T-cell (primary cell): ENCODE measurements at regions of chr5 and their contacts with region 1.

Region 1: DNA sequence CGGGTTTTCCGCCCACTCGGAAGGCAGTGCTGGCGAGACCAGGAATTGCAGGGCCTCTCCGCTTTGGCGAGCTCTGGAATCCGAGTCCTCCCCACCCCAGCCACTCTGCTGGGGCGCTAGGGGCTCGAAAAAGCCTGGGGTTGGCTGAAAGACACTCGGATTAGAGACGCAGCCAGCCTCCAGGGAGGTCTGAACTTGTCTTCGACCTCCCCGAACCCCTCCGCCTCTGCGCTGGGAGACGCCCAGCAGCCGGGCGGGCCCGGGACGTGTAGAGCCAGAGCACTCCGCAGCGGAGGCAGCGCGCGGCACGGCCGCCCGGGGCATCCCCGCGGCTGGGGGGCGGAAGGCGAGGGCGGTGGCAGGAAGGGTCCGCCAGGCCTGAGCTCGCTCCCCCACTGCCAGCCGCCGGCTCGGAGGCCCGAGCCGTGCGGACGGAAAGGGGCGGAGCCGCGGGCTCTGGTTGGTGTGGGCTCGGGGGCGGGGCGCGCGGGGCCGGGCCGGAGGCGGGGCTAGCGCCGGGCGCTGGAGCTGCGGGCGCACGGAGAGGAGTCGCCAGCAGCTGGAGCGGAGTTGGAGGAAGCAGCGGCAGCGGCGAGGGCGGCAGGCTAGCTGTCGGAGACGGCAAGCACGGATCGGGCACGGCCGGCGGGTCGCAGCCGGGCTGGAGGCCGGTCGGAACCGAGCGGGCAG is at the start of gene PIK3R1:
- DNase-seq: peak; percentile 79 to 95 (median 89)
- ATAC-seq: peak; percentile 80 to 85 (median 82)
- H3K4me3 ChIP-seq: peak within 1 kb of the TSS; percentile 76 to 90
- H3K4me3 Mint-ChIP-seq: peak within 1 kb of the TSS; percentile 85 to 93 (median 92)
- H3K27ac ChIP-seq: peak within 1 kb of the TSS; percentile 91
- H3K27ac Mint-ChIP-seq: peak within 1 kb of the TSS; percentile 93 to 97
- H3K4me1 ChIP-seq: peaks cover 16 to 24% of the 10 kb centered on the region in 2 experiments
- H3K4me1 Mint-ChIP-seq: peaks cover 41 to 45% (median 44%) of the 10 kb centered on the region in 3 donors
- H3K27me3 ChIP-seq: no peaks in the 10 kb centered on the region
- H3K27me3 Mint-ChIP-seq: no peaks in the 10 kb centered on the region
- total RNA-seq, gene PIK3R1: 83.7 to 370 (median 105) TPM

Region 2: GRCh38 chr5:68193481-68194036 is 21.8 kb before region 1 on chr5:
- CTCF ChIA-PET with region 1: interaction called, 3 to 12 read pairs
- POLR2A ChIA-PET with region 1: interaction called in 1 of 2 experiments, 6 read pairs
- DNase-seq: no peak
- ATAC-seq: peak in 1 of 4 experiments; percentile 30
- H3K4me3 ChIP-seq: no peak overlapping the region
- H3K4me3 Mint-ChIP-seq: no peak overlapping the region
- H3K27ac ChIP-seq: no peak overlapping the region
- H3K27ac Mint-ChIP-seq: no peak overlapping the region
- H3K4me1 ChIP-seq: no peaks in the 10 kb centered on the region
- H3K4me1 Mint-ChIP-seq: peaks cover 0 to 10% (median 8%) of the 10 kb centered on the region in 3 donors
- H3K27me3 ChIP-seq: no peaks in the 10 kb centered on the region
- H3K27me3 Mint-ChIP-seq: no peaks in the 10 kb centered on the region

Region 3: DNA sequence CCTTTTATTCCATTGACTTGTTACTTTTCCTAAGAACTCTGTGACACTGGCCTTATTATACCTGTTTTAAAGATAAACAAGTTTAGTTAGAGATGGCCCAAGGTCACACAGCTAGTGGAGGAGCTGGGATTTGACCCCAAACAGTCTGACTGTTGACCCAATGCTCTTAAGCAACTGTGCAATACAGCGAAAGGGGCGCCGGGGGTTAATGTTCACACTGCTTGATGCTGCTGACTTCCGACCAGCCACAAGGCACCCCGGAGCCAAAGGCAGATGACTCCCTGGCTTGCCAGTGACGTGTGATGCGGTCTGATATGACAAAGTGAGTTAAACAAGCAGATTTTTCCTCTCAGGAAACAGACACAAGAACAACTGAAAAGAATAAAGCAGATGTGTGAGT is 24.1 kb after region 1 on chr5:
- CTCF ChIA-PET with region 1: interaction called, 4 to 7 read pairs
- POLR2A ChIA-PET with region 1: interaction called, 9 to 25 read pairs
- DNase-seq: peak; percentile 36 to 91 (median 85)
- ATAC-seq: peak; percentile 94 to 98 (median 96)
- H3K4me3 ChIP-seq: no peak overlapping the region
- H3K4me3 Mint-ChIP-seq: peak overlapping the region; percentile 11 to 62 (median 29)
- H3K27ac ChIP-seq: peak overlapping the region; percentile 65
- H3K27ac Mint-ChIP-seq: peak overlapping the region; percentile 76 to 82
- H3K4me1 ChIP-seq: peaks cover 27 to 37% of the 10 kb centered on the region in 2 experiments
- H3K4me1 Mint-ChIP-seq: peaks cover 79 to 87% (median 83%) of the 10 kb centered on the region in 3 donors
- H3K27me3 ChIP-seq: no peaks in the 10 kb centered on the region
- H3K27me3 Mint-ChIP-seq: no peaks in the 10 kb centered on the region

Region 4: GRCh38 chr5:68246802-68247201 is 31.4 kb after region 1 on chr5:
- CTCF ChIA-PET with region 1: interaction called, 4 to 13 read pairs
- POLR2A ChIA-PET with region 1: interaction called in 1 of 2 experiments, 3 read pairs
- DNase-seq: peak in 1 of 35 experiments; percentile 45
- ATAC-seq: peak in 1 of 4 experiments; percentile 39
- H3K4me3 ChIP-seq: no peak overlapping the region
- H3K4me3 Mint-ChIP-seq: no peak overlapping the region
- H3K27ac ChIP-seq: no peak overlapping the region
- H3K27ac Mint-ChIP-seq: peak overlapping the region in 1 of 2 donors; percentile 56
- H3K4me1 ChIP-seq: peaks cover 39 to 41% of the 10 kb centered on the region in 2 experiments
- H3K4me1 Mint-ChIP-seq: peaks cover 78 to 87% (median 84%) of the 10 kb centered on the region in 3 donors
- H3K27me3 ChIP-seq: no peaks in the 10 kb centered on the region
- H3K27me3 Mint-ChIP-seq: no peaks in the 10 kb centered on the region

Region 5: GRCh38 chr5:68252673-68253623 is 37.6 kb after region 1 on chr5:
- CTCF ChIA-PET with region 1: interaction called, 5 to 23 read pairs
- POLR2A ChIA-PET with region 1: interaction called, 4 to 8 read pairs
- DNase-seq: peak in 25 of 35 experiments; percentile 10 to 71 (median 42)
- ATAC-seq: no peak
- H3K4me3 ChIP-seq: no peak overlapping the region
- H3K4me3 Mint-ChIP-seq: no peak overlapping the region
- H3K27ac ChIP-seq: peak overlapping the region; percentile 58
- H3K27ac Mint-ChIP-seq: peak overlapping the region; percentile 84 to 95
- H3K4me1 ChIP-seq: peaks cover 48 to 60% of the 10 kb centered on the region in 2 experiments
- H3K4me1 Mint-ChIP-seq: peaks cover 90 to 96% (median 93%) of the 10 kb centered on the region in 3 donors
- H3K27me3 ChIP-seq: no peaks in the 10 kb centered on the region
- H3K27me3 Mint-ChIP-seq: no peaks in the 10 kb centered on the region

Region 6: GRCh38 chr5:68279984-68280383 is 64.6 kb after region 1 on chr5:
- CTCF ChIA-PET with region 1: interaction called in 1 of 2 experiments, 4 read pairs
- POLR2A ChIA-PET with region 1: interaction called in 1 of 2 experiments, 14 read pairs
- DNase-seq: peak in 32 of 35 experiments; percentile 24 to 88 (median 48)
- ATAC-seq: peak; percentile 93 to 97 (median 95)
- H3K4me3 ChIP-seq: peak overlapping the region; percentile 29 to 57
- H3K4me3 Mint-ChIP-seq: peak overlapping the region; percentile 85 to 88 (median 86)
- H3K27ac ChIP-seq: peak overlapping the region; percentile 84
- H3K27ac Mint-ChIP-seq: peak overlapping the region; percentile 98
- H3K4me1 ChIP-seq: peaks cover 46 to 49% of the 10 kb centered on the region in 2 experiments
- H3K4me1 Mint-ChIP-seq: peaks cover 86 to 91% (median 90%) of the 10 kb centered on the region in 3 donors
- H3K27me3 ChIP-seq: no peaks in the 10 kb centered on the region
- H3K27me3 Mint-ChIP-seq: no peaks in the 10 kb centered on the region

Region 7: DNA sequence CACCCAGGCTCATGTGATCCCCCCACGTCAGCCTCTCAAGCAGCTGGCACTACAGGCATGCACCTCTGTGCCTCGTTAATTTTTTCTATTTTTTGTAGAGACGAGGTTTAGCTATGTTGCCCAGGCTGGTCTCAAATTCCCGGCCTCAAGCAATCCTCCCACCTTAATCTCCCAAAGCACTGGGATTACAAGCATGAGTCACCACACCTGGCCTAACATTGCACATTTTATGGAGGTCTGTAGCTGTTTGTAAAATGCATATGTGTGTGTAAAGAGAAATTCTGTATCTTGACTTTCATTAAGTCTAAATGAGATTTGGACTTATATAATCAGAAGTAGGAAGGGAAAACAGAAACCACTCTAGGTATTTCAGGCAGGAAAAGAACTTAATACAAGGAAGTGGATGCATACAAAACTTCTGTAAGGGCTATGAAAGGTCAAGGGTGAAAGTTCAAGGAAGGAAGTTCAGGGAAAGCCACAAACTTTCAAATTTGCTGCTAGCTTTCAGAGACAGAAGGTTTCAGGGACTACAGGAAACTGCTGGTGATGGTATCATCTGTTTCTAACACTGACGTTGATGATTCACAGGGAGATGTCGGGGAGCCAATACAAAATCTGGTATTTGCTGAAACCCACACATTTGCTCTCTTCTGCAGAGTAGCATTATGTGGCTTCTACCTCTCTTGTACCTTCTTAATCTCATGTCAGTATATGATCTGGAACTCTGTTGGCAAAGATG is 209.6 kb after region 1 on chr5:
- CTCF ChIA-PET with region 1: interaction called in 1 of 2 experiments, 15 read pairs
- POLR2A ChIA-PET with region 1: no interaction called
- DNase-seq: peak in 9 of 35 experiments; percentile 3 to 58 (median 13)
- ATAC-seq: peak; percentile 82 to 90 (median 90)
- H3K4me3 ChIP-seq: no peak overlapping the region
- H3K4me3 Mint-ChIP-seq: peak overlapping the region in 1 of 3 donors; percentile 4
- H3K27ac ChIP-seq: peak overlapping the region; percentile 63
- H3K27ac Mint-ChIP-seq: peak overlapping the region; percentile 85 to 86
- H3K4me1 ChIP-seq: peaks cover 6 to 16% of the 10 kb centered on the region in 2 experiments
- H3K4me1 Mint-ChIP-seq: peaks cover 22 to 28% (median 26%) of the 10 kb centered on the region in 3 donors
- H3K27me3 ChIP-seq: no peaks in the 10 kb centered on the region
- H3K27me3 Mint-ChIP-seq: no peaks in the 10 kb centered on the region

Region 8: GRCh38 chr5:68446487-68446894 is 231.1 kb after region 1 on chr5:
- CTCF ChIA-PET with region 1: no interaction called
- POLR2A ChIA-PET with region 1: no interaction called
- DNase-seq: no peak
- ATAC-seq: no peak
- H3K4me3 ChIP-seq: no peak overlapping the region
- H3K4me3 Mint-ChIP-seq: no peak overlapping the region
- H3K27ac ChIP-seq: no peak overlapping the region
- H3K27ac Mint-ChIP-seq: no peak overlapping the region
- H3K4me1 ChIP-seq: peaks cover 0 to 2% of the 10 kb centered on the region in 2 experiments
- H3K4me1 Mint-ChIP-seq: peaks cover 4 to 12% (median 7%) of the 10 kb centered on the region in 3 donors
- H3K27me3 ChIP-seq: no peaks in the 10 kb centered on the region
- H3K27me3 Mint-ChIP-seq: no peaks in the 10 kb centered on the region